ENCODE measurements at regions of chr5 and their contacts with region 1.

Region 1: GRCh38 chr5:40386289-40386688 is 293.4 kb upstream of the PTGER4 start:
- DNase-seq: peak; percentile 56
- H3K4me3 Mint-ChIP-seq: no peak overlapping the region
- H3K27ac Mint-ChIP-seq: peak overlapping the region; percentile 62
- H3K4me1 Mint-ChIP-seq: peaks cover 90% of the 10 kb centered on the region
- H3K27me3 Mint-ChIP-seq: no peaks in the 10 kb centered on the region

Region 2: DNA sequence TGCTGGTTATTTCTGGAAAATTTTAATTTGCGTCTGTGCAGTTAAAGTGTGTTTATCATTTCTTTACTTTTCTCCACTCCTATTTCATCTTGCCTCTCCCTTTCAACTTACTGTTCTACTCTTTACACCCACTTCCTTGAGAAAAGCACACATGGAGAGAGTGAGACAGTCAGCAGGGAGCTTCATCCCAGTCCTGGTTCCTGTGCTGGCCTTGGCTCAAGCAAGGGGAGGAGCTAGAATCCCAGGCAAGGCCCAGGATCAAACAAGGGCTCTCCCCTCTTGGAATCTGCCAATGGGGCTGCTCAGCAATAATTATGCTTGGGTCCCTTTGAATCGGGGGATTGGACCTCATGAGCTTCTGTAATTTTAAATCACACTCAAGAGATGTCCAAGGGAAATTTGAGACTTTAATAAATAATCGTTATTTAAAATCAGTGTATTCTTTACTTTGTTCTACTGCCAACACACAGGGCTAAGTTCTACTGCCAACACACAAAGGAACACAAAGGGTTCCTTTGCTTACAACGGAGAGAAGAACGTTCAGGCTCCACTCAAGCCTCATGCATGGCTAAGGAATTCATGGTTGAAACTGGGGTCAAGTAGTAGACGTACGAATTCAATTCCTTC is 522.2 kb before region 1 on chr5:
- CTCF ChIA-PET with region 1: no interaction called
- POLR2A ChIA-PET with region 1: no interaction called
- intact Hi-C with region 1: no loop called
- DNase-seq: no peak
- H3K4me3 Mint-ChIP-seq: no peak overlapping the region
- H3K27ac Mint-ChIP-seq: no peak overlapping the region
- H3K4me1 Mint-ChIP-seq: no peaks in the 10 kb centered on the region
- H3K27me3 Mint-ChIP-seq: peaks cover 3% of the 10 kb centered on the region

Region 3: GRCh38 chr5:39948867-39949468 is 437.3 kb before region 1 on chr5:
- CTCF ChIA-PET with region 1: interaction called, 5 read pairs
- POLR2A ChIA-PET with region 1: no interaction called
- intact Hi-C with region 1: loop called (anchors 1 kb)
- DNase-seq: peak; percentile 54
- H3K4me3 Mint-ChIP-seq: no peak overlapping the region
- H3K27ac Mint-ChIP-seq: peak overlapping the region; percentile 4
- H3K4me1 Mint-ChIP-seq: peaks cover 3% of the 10 kb centered on the region
- H3K27me3 Mint-ChIP-seq: no peaks in the 10 kb centered on the region

Region 4: GRCh38 chr5:40223884-40224402 is 162.3 kb before region 1 on chr5:
- CTCF ChIA-PET with region 1: interaction called, 4 read pairs
- POLR2A ChIA-PET with region 1: interaction called, 9 read pairs
- intact Hi-C with region 1: loop called (anchors 1 kb)
- DNase-seq: peak; percentile 67
- H3K4me3 Mint-ChIP-seq: peak overlapping the region; percentile 59
- H3K27ac Mint-ChIP-seq: peak overlapping the region; percentile 95
- H3K4me1 Mint-ChIP-seq: peaks cover 66% of the 10 kb centered on the region
- H3K27me3 Mint-ChIP-seq: no peaks in the 10 kb centered on the region

Region 5: DNA sequence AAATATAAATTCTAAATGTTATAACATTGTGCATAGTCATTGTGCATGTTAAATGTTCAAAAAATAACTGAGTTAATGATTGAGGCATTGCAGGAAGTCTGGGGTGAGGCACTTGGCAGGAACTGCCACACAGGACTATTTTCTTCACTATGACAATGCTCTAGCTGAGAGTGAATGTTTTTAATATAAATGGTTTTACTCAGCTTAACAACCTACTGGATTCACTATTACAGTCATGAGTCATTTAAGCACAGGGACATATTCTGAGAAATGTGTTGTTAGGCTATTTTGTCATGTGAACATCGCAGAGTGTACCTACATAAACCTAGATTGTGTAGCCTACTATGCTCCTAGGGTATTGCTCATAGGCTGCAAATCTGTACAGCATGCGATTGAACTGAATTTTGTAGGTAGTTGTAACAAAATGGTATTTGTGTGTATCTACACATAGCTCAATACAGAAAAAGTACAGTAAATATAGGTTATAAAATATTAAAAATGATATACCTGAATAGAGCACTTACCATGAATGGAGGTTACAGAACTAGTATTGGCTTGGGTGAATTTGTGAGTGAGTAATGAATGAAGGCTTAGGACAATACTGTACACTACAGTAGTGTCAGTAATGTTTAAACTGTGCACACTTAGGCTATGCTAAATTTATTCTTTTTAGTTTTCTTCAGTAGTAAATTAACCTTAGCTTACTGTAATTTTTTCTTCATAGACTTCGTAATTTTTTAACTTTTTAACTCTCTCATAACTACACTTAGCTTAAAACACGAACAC is 52.6 kb before region 1 on chr5:
- CTCF ChIA-PET with region 1: no interaction called
- POLR2A ChIA-PET with region 1: interaction called, 4 read pairs
- intact Hi-C with region 1: loop called (anchors 1 kb)
- DNase-seq: peak; percentile 56
- H3K4me3 Mint-ChIP-seq: no peak overlapping the region
- H3K27ac Mint-ChIP-seq: peak overlapping the region; percentile 33
- H3K4me1 Mint-ChIP-seq: peaks cover 50% of the 10 kb centered on the region
- H3K27me3 Mint-ChIP-seq: no peaks in the 10 kb centered on the region

Region 6: DNA sequence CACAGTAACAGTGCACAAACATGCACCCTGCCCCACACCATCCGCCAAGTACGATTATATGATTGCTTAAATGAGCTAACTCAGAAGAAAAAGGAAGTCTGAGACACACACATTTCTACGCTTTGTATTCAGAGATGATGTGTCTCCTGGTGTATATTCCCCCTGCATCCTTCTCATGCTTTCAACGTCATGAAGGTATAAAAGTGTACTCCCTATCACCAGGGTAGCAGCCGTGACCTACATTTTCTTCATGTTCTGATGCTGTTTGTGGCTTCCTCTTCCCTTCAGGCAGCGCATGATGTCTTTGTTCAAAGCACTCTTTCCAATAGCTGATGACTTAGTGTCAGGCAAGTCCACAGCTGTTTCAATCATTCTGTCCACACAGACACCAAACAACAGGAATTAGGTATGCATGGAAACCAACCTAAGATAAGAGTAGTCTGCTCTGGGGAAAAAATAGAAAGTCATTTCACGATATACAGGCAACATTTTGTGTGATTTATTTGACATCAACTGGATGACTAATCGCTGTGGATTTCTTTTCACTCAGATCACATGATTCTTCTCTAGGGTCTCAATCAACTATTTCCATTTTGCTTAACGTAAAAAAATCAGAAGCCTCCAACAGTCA is 24.1 kb after region 1 on chr5:
- CTCF ChIA-PET with region 1: interaction called, 12 read pairs
- POLR2A ChIA-PET with region 1: interaction called, 39 read pairs
- intact Hi-C with region 1: loop called (anchors 1 kb)
- DNase-seq: peak; percentile 82
- H3K4me3 Mint-ChIP-seq: peak overlapping the region; percentile 62
- H3K27ac Mint-ChIP-seq: peak overlapping the region; percentile 99
- H3K4me1 Mint-ChIP-seq: peaks cover 64% of the 10 kb centered on the region
- H3K27me3 Mint-ChIP-seq: no peaks in the 10 kb centered on the region

Region 7: DNA sequence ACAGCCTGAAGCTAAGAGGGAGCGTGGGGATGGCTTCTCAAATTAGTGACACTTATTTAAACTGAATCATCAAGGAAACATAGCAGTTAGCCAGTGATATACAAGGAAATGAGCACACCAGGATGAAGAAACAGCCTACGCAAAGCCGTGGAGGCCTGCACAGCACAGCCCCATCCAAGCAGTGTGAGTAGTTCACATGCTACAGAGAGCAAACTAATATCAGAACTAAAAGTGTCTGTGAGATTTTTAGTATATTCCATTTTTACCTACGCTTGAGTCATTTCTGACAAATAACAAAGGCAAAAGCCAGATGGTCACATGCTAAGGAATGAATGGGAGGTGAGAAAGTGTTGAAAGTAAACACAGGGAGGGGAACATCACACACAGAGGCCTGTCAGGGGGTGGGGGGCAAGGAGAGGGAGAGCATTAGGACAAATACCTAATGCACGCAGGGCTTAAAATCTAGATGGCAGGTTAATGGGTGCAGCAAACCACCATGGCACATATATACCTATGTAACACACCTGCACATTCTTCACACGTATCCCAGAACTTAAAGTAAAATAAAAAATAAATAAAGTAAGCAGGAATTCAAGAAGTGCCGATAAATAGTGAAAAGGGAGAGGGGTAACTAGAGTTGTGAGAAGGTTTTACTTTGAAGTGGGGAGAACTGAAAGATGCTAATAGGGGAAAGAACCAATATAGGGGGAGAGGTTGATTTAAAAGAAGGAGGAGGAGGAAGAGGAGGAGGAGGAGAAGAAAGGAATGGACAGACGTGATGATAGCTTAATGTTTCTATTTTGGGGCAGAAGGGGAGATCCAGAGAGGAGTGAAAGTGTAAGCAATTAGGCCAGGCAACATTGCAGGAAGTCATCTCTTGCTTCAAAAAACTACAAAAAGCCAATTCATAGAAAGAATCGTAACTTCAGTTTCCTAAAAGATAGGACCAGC is 192.5 kb after region 1 on chr5:
- CTCF ChIA-PET with region 1: no interaction called
- POLR2A ChIA-PET with region 1: no interaction called
- intact Hi-C with region 1: loop called (anchors 1 kb)
- DNase-seq: peak; percentile 86
- H3K4me3 Mint-ChIP-seq: peak overlapping the region; percentile 48
- H3K27ac Mint-ChIP-seq: peak overlapping the region; percentile 66
- H3K4me1 Mint-ChIP-seq: peaks cover 38% of the 10 kb centered on the region
- H3K27me3 Mint-ChIP-seq: no peaks in the 10 kb centered on the region

Region 8: DNA sequence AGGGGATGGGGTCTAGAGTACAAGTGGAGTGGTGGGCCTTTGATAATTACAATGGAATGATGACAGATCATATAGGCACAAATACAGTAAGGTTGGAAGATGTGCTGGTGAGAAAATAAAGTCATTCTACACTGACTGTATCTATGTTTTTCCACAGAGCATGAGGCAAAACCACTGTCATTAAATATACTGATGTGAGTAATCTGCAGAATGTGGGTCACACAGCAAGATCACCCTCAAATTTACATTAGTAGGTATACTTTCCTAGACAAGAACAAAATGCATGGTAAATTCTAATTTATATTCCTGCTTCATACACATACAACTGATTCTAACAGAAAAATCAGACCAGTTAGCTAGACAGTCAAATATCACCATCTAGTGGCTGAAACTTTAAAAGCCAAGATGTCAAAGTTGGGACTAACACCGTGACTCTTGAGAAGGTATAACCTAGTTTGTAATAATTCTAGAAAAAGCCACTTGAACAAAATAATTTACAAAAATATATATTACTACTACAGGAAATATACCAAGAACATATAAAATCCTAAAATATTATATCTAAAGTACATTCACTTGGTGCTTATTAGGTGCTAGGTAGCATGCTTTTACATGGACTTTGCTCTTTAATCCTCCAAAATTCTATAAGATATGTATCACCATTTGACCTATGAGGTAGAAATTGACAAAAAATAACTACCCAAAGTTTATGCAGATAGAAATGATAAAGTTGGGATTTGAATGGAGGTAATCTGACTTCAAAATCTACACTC is 350.0 kb after region 1 on chr5:
- CTCF ChIA-PET with region 1: no interaction called
- POLR2A ChIA-PET with region 1: no interaction called
- intact Hi-C with region 1: loop called (anchors 2 kb)
- DNase-seq: no peak
- H3K4me3 Mint-ChIP-seq: no peak overlapping the region
- H3K27ac Mint-ChIP-seq: no peak overlapping the region
- H3K4me1 Mint-ChIP-seq: peaks cover 23% of the 10 kb centered on the region
- H3K27me3 Mint-ChIP-seq: no peaks in the 10 kb centered on the region